Activated T-helper 1 cell treated with anti-CD3 and anti-CD28 coated beads, Interleukin-12 subunit alpha, Interleukin-12 subunit beta, Interleukin-2, Interleukin-4 antibody, amounts not matched to agents 30 ng/mL and 10 ng/mL and 1 ng/mL, durations not matched to agents 14 hours and 24 hours and 36 hours (primary cell): ENCODE measurements at regions of chr3 and their contacts with region 1.

Region 1: GRCh38 chr3:138594150-138594934 is at the start of gene CEP70:
- DNase-seq: peak; percentile 79
- H3K4me3 Mint-ChIP-seq: peak within 1 kb of the TSS; percentile 87
- H3K27ac Mint-ChIP-seq: peak within 1 kb of the TSS; percentile 86
- H3K4me1 Mint-ChIP-seq: peaks cover 11% of the 10 kb centered on the region
- H3K27me3 Mint-ChIP-seq: peaks cover 3% of the 10 kb centered on the region
- total RNA-seq, gene CEP70: 2.4 and 3.1 TPM in 2 replicates

Region 2: GRCh38 chr3:138068579-138069174 is 525.7 kb before region 1 on chr3:
- intact Hi-C with region 1: loop called (anchors 10 kb)
- DNase-seq: peak; percentile 59
- H3K4me3 Mint-ChIP-seq: no peak overlapping the region
- H3K27ac Mint-ChIP-seq: no peak overlapping the region
- H3K4me1 Mint-ChIP-seq: peaks cover 25% of the 10 kb centered on the region
- H3K27me3 Mint-ChIP-seq: peaks cover 16% of the 10 kb centered on the region

Region 3: GRCh38 chr3:138329127-138329983 is 265.0 kb before region 1 on chr3 and contains the start of gene NME9:
- intact Hi-C with region 1: loop called (anchors 5 kb)
- DNase-seq: peak; percentile 83
- H3K4me3 Mint-ChIP-seq: peak within 1 kb of the TSS; percentile 87
- H3K27ac Mint-ChIP-seq: peak within 1 kb of the TSS; percentile 68
- H3K4me1 Mint-ChIP-seq: peaks cover 33% of the 10 kb centered on the region
- H3K27me3 Mint-ChIP-seq: peaks cover 2% of the 10 kb centered on the region
- total RNA-seq, gene NME9: not detected in 2 replicates

Region 4: GRCh38 chr3:138567401-138567800 is 26.9 kb before region 1 on chr3:
- intact Hi-C with region 1: loop called (anchors 1 kb)
- DNase-seq: no peak
- H3K4me3 Mint-ChIP-seq: no peak overlapping the region
- H3K27ac Mint-ChIP-seq: no peak overlapping the region
- H3K4me1 Mint-ChIP-seq: peaks cover 19% of the 10 kb centered on the region
- H3K27me3 Mint-ChIP-seq: no peaks in the 10 kb centered on the region

Region 5: GRCh38 chr3:138834359-138835212 is 240.2 kb after region 1 on chr3 and contains the start of gene PIK3CB:
- intact Hi-C with region 1: loop called (anchors 1 kb)
- DNase-seq: peak; percentile 79
- H3K4me3 Mint-ChIP-seq: peak within 1 kb of the TSS; percentile 94
- H3K27ac Mint-ChIP-seq: peak within 1 kb of the TSS; percentile 94
- H3K4me1 Mint-ChIP-seq: peaks cover 22% of the 10 kb centered on the region
- H3K27me3 Mint-ChIP-seq: no peaks in the 10 kb centered on the region
- total RNA-seq, gene PIK3CB: 19.3 and 22.0 TPM in 2 replicates

Region 6: DNA sequence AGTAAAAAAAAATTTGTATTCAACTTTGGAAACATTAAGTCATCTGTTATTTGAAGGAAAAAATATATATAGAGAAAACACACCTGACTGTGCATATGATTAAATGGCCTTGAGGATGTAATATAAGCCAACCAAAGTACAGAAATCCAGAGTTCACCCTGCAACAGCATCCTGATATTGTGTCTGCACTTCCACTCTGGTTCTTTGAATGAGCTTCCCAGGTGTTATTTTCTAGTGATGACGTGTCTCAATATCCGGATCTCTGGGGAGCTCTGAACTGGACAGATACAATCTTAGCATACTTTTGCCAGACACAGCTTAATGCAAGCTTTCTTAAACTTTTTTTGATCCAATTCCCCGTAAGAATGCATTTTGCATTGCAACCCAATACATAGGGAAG is 259.9 kb after region 1 on chr3:
- intact Hi-C with region 1: no loop called
- DNase-seq: no peak
- H3K4me3 Mint-ChIP-seq: no peak overlapping the region
- H3K27ac Mint-ChIP-seq: no peak overlapping the region
- H3K4me1 Mint-ChIP-seq: no peaks in the 10 kb centered on the region
- H3K27me3 Mint-ChIP-seq: peaks cover 6% of the 10 kb centered on the region

Region 7: DNA sequence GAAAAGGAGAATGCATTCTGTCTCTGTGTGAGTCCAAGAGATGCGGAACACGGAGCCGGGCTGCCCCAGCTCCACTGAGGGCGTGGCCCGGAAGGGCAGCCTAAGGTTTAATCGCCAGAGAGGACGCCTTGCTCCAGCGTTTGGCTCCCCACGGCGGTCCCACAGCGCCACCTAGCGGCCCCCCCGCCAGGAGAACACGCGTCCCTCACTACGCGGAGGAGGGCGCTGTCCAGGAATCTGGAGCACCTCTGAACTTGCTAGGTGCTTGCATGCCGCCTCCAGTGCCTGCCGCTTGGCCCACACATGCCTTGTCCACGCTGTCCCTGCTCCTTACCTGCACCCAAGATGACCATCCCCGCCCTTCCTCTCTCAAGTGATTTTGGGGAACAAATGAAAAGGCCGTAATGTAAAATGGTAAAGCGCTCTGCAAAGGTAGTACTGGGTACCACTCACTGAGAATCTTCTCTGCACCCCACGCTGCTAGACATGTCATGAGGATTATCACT is 735.1 kb after region 1 on chr3:
- intact Hi-C with region 1: loop called (anchors 1 kb)
- DNase-seq: peak; percentile 79
- H3K4me3 Mint-ChIP-seq: peak overlapping the region; percentile 32
- H3K27ac Mint-ChIP-seq: no peak overlapping the region
- H3K4me1 Mint-ChIP-seq: peaks cover 18% of the 10 kb centered on the region
- H3K27me3 Mint-ChIP-seq: peaks cover 21% of the 10 kb centered on the region